ENCODE measurements at regions of chr1 and their contacts with region 1.

Region 1: GRCh38 chr1:167687919-167688519 is 33.8 kb upstream of the MPZL1 start:
- DNase-seq: peak; percentile 86
- ATAC-seq: peak; percentile 24
- H3K4me3 Mint-ChIP-seq: no peak overlapping the region
- H3K27ac Mint-ChIP-seq: no peak overlapping the region
- H3K4me1 Mint-ChIP-seq: peaks cover 39% of the 10 kb centered on the region
- H3K27me3 Mint-ChIP-seq: peaks cover 5% of the 10 kb centered on the region; the same call in 1 of the 2 replicates
- CTCF ChIP-seq: peak; percentile 85

Region 2: DNA sequence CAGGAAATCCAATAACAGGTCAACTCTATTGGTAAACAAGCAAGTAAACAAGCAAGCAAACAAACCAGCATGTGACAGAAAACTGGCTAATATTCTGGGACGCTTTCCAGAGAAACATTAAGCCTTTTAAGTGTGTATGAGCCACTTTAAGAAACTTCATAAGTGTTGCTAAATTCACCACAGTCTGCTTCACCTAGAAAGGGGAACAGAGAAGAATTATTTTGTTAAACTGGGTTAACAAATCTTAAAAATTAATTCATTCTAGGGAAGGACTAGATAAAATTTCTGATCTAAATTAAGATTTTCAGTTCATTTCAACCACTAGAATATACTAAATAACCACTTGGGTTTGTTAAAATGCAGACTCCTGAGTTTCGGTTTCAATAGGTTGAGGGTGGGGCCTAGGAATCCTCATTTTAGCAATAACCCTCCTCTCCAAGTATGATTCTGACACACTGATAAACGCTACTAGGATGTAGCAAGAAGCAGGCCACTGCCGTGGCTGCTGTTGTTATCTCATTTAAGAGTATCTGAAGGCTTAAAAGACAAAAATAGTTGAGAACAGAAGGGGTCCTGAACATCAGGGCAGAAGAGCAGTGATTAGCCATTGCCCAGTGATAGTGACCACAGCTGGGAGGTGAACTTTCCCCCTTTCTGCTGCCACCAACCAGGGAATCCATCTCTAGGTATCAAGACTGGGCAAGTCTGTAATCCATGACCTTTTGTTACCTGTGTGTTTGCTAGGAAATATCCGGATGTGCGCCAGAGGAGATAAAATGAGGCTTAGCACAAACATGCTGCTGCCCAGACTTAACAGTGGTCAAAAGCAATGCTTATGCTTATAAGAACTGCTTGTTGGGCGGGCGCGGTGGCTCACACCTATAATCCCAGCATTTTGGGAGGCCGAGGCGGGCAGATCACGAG is 145.6 kb before region 1 on chr1:
- CTCF ChIA-PET with region 1: interaction called, 29 read pairs
- POLR2A ChIA-PET with region 1: no interaction called
- DNase-seq: no peak
- ATAC-seq: no peak
- H3K4me3 Mint-ChIP-seq: no peak overlapping the region
- H3K27ac Mint-ChIP-seq: no peak overlapping the region
- H3K4me1 Mint-ChIP-seq: peaks cover 12% of the 10 kb centered on the region
- H3K27me3 Mint-ChIP-seq: no peaks in the 10 kb centered on the region
- CTCF ChIP-seq: no peak

Region 3: GRCh38 chr1:167563579-167564246 is 124.3 kb before region 1 on chr1:
- CTCF ChIA-PET with region 1: interaction called, 54 read pairs
- POLR2A ChIA-PET with region 1: no interaction called
- DNase-seq: no peak
- ATAC-seq: no peak
- H3K4me3 Mint-ChIP-seq: no peak overlapping the region
- H3K27ac Mint-ChIP-seq: no peak overlapping the region
- H3K4me1 Mint-ChIP-seq: 0 out of 2 replicates have a peak, but pooled peaks cover 3% of the 10 kb centered on the region
- H3K27me3 Mint-ChIP-seq: no peaks in the 10 kb centered on the region
- CTCF ChIP-seq: no peak

Region 4: DNA sequence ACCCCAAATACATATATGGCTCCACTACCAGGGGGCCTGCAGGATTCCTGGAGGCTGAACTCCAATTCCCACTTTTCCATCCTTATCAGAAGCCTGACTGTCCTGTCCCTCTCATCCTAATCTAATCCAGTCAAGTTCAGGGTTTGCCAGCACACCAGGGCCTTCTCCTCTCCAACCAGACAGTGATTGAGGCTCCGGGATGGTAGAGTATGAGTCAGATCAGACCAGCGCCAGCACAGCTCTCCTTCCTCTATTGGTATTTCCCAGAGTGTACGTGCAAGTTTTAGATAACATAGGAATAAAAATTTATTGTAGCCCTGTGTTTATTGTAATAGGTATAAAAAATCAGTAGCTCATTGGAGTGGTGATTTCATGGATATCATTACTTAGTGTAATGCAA is 82.4 kb before region 1 on chr1:
- CTCF ChIA-PET with region 1: interaction called, 37 read pairs
- POLR2A ChIA-PET with region 1: interaction called, 3 read pairs
- DNase-seq: no peak
- ATAC-seq: no peak
- H3K4me3 Mint-ChIP-seq: no peak overlapping the region
- H3K27ac Mint-ChIP-seq: no peak overlapping the region
- H3K4me1 Mint-ChIP-seq: peaks cover 2% of the 10 kb centered on the region; the same call in 1 of the 2 replicates
- H3K27me3 Mint-ChIP-seq: no peaks in the 10 kb centered on the region; the same call in 1 of the 2 replicates
- CTCF ChIP-seq: no peak

Region 5: DNA sequence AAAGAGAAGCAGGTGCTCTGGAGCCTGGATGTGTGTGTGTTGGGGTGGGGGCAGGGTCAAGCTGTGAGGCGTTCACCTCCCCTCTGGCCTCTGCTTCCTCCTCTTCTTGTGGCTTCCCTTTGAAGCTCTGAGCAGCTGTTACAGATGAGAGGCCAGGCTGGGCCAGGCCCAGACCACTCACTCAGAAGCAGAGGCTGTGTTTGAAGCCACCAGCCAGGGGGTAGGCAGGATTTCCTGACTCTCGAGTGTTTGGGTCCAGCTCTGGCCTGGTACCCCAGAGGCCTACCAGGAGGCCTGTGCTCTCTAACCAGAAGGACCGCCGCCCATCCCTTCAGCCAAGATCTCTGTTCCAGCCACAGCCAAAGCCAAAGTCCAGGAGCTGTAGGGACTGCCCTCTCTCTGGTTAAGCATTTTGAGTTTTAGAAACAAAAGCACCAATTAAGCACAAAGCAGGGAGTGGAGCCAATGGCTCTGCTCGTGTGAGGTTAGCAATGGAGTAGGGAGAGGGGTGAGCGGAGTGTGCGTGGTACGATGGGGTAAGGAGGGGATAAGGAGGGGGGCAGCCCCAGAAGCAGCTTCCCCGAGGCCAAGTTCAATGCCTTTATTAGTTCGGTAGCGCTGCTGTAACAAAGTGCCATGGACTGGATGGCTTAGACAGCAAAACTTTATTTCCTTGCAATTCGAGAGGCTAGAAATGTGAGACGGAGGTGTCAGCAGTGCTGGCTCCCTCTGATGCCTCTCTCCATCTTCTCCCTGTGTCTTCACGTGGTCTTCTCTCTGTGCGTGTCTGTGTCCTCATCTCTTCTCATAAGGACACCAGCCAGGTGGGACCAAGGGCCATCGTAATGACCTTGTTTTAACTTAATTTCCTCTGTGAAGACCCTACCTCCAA is 37.5 kb before region 1 on chr1:
- CTCF ChIA-PET with region 1: interaction called, 12 read pairs
- POLR2A ChIA-PET with region 1: no interaction called
- DNase-seq: no peak
- ATAC-seq: peak; percentile 17; the same call in 1 of the 2 replicates
- H3K4me3 Mint-ChIP-seq: no peak overlapping the region
- H3K27ac Mint-ChIP-seq: no peak overlapping the region
- H3K4me1 Mint-ChIP-seq: peaks cover 19% of the 10 kb centered on the region
- H3K27me3 Mint-ChIP-seq: no peaks in the 10 kb centered on the region; the same call in 1 of the 2 replicates
- CTCF ChIP-seq: no peak

Region 6: DNA sequence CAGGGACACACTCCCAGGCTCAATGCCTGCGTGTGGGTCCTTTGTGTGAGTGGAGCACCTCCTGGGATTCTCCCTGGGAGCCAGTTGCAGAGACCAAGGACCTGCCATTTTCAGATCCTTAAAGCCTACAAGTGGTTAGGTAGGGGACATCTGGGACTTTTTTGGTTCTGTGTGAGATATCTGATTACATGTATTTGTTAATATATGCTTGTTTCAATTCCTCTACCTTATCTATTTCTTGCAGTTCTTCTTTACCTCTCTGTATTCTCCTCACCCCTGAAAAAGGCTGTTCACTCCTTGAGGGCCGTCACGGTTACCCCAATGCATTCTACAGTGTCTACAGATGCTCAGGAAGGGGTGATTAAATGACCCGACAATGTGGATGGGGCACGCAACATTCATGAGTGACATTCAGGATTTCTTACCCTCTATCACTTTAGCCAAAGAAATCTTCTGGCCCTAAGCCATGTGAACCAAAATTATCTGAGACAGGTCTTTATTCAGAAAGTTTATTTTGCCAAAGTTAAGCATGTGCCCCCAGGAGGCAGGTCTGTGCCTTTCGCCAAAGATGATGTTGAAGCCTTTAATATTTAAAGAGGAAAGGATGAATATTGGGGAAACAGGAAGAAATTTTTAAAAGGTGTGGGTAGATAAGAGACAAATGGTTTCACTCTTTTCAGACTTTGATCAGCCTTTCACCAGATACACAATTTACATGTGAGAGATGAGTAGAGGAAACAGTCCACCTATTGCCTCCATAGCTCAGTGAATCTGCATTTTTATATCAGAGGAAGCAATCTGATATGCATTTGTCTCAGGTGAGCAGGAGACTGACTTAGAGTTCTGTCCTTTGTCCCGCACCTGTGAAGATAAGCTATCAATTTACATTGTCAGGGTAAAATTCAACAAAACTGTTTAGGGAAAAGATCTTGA is 10.8 kb before region 1 on chr1:
- CTCF ChIA-PET with region 1: interaction called, 14 read pairs
- POLR2A ChIA-PET with region 1: no interaction called
- DNase-seq: no peak
- ATAC-seq: no peak
- H3K4me3 Mint-ChIP-seq: no peak overlapping the region
- H3K27ac Mint-ChIP-seq: no peak overlapping the region
- H3K4me1 Mint-ChIP-seq: no peaks in the 10 kb centered on the region; the same call in none of the 2 replicates
- H3K27me3 Mint-ChIP-seq: no peaks in the 10 kb centered on the region
- CTCF ChIP-seq: no peak

Measured in WTC11 (cell line).